Caco-2 (cell line): ENCODE measurements at regions of chr15 and their contacts with region 1.

Region 1: DNA sequence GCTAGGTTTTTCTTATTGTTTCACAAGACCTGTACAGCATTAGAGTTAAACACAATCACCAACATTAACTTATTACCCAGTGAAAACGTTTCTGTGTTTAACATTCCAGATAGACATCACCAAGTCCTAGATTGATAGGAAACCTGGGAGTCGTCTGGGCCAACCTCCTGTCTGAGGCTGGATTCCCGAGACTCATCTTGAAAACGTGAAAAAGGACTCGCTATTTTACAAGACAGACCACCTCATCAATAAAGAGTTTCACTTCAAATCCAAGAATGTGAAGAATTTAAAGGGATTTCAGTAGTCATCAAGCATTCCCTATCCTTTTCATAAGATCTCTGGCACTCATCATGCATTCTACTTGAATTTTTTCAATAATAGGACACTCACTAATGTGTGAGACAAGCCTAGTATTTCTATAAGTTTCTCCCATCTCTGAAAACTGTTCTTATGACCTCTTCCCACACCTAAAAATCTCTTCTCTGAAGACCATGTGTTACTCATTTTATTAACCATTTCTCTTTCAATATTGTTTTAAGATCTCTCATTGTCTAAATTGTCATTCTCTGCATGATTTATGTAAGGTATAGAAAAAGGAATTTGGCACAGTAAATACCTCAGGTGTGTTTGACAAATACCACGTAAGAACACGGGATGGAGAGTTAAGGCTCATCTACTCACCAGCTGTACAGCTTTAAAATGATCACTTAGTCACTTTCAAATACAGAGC is 626.8 kb downstream of the MCTP2 start:
- DNase-seq: peak in 1 of 2 experiments; percentile 33
- H3K4me3 ChIP-seq: no peak overlapping the region
- H3K4me3 Mint-ChIP-seq: peak overlapping the region; percentile 45
- H3K27ac Mint-ChIP-seq: peak overlapping the region; percentile 65
- H3K4me1 ChIP-seq: peaks cover 6% of the 10 kb centered on the region
- H3K4me1 Mint-ChIP-seq: peaks cover 30% of the 10 kb centered on the region
- H3K27me3 ChIP-seq: no peaks in the 10 kb centered on the region
- H3K27me3 Mint-ChIP-seq: no peaks in the 10 kb centered on the region
- CTCF ChIP-seq: no peak

Region 2: DNA sequence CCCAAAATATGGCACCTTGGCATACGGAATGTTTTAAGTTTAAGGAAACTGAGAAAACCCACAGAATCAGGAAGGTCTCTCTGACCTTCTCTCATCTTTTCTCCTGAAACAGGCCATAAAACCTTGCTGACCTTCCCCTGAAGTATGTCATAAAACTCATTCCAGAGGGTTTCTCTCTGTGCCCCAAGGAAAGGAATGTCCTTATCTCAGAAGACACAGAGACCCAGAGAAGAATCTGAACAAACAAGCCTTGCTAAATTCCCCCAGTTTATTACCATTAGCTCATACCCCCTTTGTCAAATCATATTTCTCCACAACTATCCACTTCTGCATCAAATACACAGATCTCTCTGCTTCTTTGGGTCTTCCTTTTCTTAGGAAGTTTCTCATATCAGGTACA is 23.7 kb before region 1 on chr15:
- CTCF ChIA-PET with region 1: no interaction called
- POLR2A ChIA-PET with region 1: no interaction called
- intact Hi-C with region 1: loop called (anchors 1 kb)
- DNase-seq: peak; percentile 40 to 65
- H3K4me3 ChIP-seq: no peak overlapping the region
- H3K4me3 Mint-ChIP-seq: peak overlapping the region; percentile 18
- H3K27ac Mint-ChIP-seq: peak overlapping the region; percentile 82
- H3K4me1 ChIP-seq: peaks cover 35% of the 10 kb centered on the region
- H3K4me1 Mint-ChIP-seq: peaks cover 18% of the 10 kb centered on the region
- H3K27me3 ChIP-seq: no peaks in the 10 kb centered on the region
- H3K27me3 Mint-ChIP-seq: no peaks in the 10 kb centered on the region
- CTCF ChIP-seq: no peak

Region 3: GRCh38 chr15:94844538-94845389 is 13.4 kb before region 1 on chr15:
- CTCF ChIA-PET with region 1: no interaction called
- POLR2A ChIA-PET with region 1: interaction called, 4 read pairs
- intact Hi-C with region 1: loop called (anchors 1 kb)
- DNase-seq: peak; percentile 78 to 84
- H3K4me3 ChIP-seq: peak overlapping the region; percentile 34
- H3K4me3 Mint-ChIP-seq: peak overlapping the region; percentile 76
- H3K27ac Mint-ChIP-seq: peak overlapping the region; percentile 84
- H3K4me1 ChIP-seq: peaks cover 10% of the 10 kb centered on the region; the same call in 1 of the 2 replicates
- H3K4me1 Mint-ChIP-seq: peaks cover 6% of the 10 kb centered on the region
- H3K27me3 ChIP-seq: no peaks in the 10 kb centered on the region
- H3K27me3 Mint-ChIP-seq: no peaks in the 10 kb centered on the region
- CTCF ChIP-seq: peak in 1 of 2 experiments; percentile 10

Region 4: DNA sequence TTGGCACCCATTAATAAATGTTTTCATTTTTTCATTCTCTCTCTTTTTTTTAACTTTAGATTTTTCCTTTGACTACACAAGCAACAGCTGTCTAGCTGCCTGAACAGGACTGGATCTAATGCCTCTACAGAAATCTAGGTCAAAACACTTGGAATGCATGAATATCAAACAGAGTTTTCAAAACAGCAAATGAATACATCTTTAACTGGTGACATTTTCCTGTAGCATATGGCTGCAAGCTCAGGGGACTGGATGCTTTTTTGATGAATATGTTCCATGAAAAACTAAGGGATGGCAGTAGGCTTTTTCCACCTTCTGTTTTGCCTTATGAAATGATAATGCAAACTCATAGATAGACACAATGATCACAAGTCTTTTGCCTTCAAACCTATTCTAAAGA is 34.9 kb after region 1 on chr15:
- CTCF ChIA-PET with region 1: no interaction called
- POLR2A ChIA-PET with region 1: no interaction called
- intact Hi-C with region 1: no loop called
- DNase-seq: no peak
- H3K4me3 ChIP-seq: no peak overlapping the region
- H3K4me3 Mint-ChIP-seq: no peak overlapping the region
- H3K27ac Mint-ChIP-seq: no peak overlapping the region
- H3K4me1 ChIP-seq: no peaks in the 10 kb centered on the region
- H3K4me1 Mint-ChIP-seq: no peaks in the 10 kb centered on the region
- H3K27me3 ChIP-seq: no peaks in the 10 kb centered on the region
- H3K27me3 Mint-ChIP-seq: no peaks in the 10 kb centered on the region
- CTCF ChIP-seq: no peak

Region 5: GRCh38 chr15:94909489-94909888 is 51.3 kb after region 1 on chr15:
- CTCF ChIA-PET with region 1: no interaction called
- POLR2A ChIA-PET with region 1: no interaction called
- intact Hi-C with region 1: loop called (anchors 2 kb)
- DNase-seq: no peak
- H3K4me3 ChIP-seq: no peak overlapping the region
- H3K4me3 Mint-ChIP-seq: no peak overlapping the region
- H3K27ac Mint-ChIP-seq: no peak overlapping the region
- H3K4me1 ChIP-seq: peaks cover 3% of the 10 kb centered on the region; the same call in 1 of the 2 replicates
- H3K4me1 Mint-ChIP-seq: peaks cover 6% of the 10 kb centered on the region
- H3K27me3 ChIP-seq: no peaks in the 10 kb centered on the region
- H3K27me3 Mint-ChIP-seq: no peaks in the 10 kb centered on the region
- CTCF ChIP-seq: no peak

Region 6: GRCh38 chr15:94991718-94992117 is 133.5 kb after region 1 on chr15:
- CTCF ChIA-PET with region 1: no interaction called
- POLR2A ChIA-PET with region 1: no interaction called
- intact Hi-C with region 1: no loop called
- DNase-seq: no peak
- H3K4me3 ChIP-seq: no peak overlapping the region
- H3K4me3 Mint-ChIP-seq: no peak overlapping the region
- H3K27ac Mint-ChIP-seq: no peak overlapping the region
- H3K4me1 ChIP-seq: no peaks in the 10 kb centered on the region
- H3K4me1 Mint-ChIP-seq: no peaks in the 10 kb centered on the region
- H3K27me3 ChIP-seq: no peaks in the 10 kb centered on the region
- H3K27me3 Mint-ChIP-seq: no peaks in the 10 kb centered on the region
- CTCF ChIP-seq: no peak